ENCODE measurements at regions of chr11 and their contacts with region 1.

Region 1: GRCh38 chr11:43504316-43504950 is 145.7 kb downstream of the TTC17 start:
- DNase-seq: no peak
- H3K4me3 ChIP-seq: no peak overlapping the region
- H3K27ac ChIP-seq: no peak overlapping the region
- H3K4me1 ChIP-seq: no peaks in the 10 kb centered on the region
- H3K27me3 ChIP-seq: peaks cover 5 to 7% of the 10 kb centered on the region in 2 experiments
- CTCF ChIP-seq: peak in 1 of 2 donors; percentile 19
- POLR2A ChIP-seq: no peak

Region 2: DNA sequence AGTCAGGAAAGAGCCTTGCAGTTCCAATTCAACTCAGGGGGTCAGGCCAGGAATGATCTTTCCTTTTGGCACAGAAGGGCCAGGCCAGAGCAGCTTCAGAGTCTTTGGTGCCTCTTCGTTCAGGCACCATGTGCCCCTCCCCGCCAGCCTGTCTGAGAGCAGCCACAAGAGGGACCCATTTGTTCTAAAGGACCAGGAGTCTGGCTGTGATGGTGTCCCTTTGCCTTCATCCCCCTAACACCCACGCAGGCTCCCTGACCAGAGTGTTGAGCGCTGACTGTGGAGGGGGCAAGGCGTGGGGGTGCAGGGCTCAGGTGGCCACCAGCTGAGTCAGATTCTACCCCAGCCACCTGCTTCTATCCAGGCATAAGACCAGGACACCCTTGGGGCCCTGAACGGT is 10.7 kb after region 1 on chr11:
- CTCF ChIA-PET with region 1: interaction called, 12 read pairs
- POLR2A ChIA-PET with region 1: no interaction called
- dilution Hi-C with region 1: no loop called
- intact Hi-C with region 1: no loop called
- DNase-seq: no peak
- H3K4me3 ChIP-seq: no peak overlapping the region
- H3K27ac ChIP-seq: no peak overlapping the region
- H3K4me1 ChIP-seq: no peaks in the 10 kb centered on the region
- H3K27me3 ChIP-seq: no peaks in the 10 kb centered on the region
- CTCF ChIP-seq: peak in 1 of 2 donors; percentile 15
- POLR2A ChIP-seq: no peak

Region 3: DNA sequence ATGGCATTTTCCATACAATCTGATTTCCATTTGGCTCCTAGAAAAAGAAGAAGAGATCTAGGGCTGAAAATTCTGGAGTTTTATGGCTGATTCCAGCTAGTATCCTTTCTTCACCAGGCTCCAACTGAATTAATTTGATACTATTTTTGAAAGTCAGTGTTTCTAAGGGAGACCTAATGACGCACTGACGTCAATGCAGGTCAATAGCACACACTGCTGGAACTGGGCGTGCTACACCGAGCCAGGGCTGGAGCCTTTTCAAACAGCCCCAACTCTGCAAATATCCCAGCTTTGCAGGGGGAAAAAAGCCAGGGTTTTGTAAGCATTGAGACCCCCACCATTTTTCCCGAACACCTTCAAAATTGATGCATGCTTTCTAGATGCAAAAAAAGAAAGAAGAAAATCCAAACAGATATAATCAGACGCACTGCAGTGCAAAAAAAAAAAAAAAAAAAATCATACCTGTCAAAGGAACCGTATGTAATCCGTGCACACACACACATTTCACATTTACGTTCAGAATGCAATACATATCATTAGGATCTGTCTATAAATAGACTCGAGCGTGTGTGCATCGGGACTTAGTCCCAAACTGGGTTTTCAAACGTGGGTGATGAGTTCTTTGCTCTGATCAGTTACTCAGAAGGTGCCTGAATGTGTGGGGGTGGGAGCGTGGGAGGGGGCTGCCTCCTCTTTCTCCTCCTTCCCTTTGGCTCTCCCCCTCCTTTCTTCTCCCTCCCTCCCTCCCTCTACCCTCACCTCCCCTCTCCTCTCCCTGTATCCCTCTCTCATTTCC is 51.6 kb after region 1 on chr11:
- CTCF ChIA-PET with region 1: no interaction called
- POLR2A ChIA-PET with region 1: no interaction called
- dilution Hi-C with region 1: no loop called
- intact Hi-C with region 1: no loop called
- DNase-seq: no peak
- H3K4me3 ChIP-seq: no peak overlapping the region
- H3K27ac ChIP-seq: no peak overlapping the region
- H3K4me1 ChIP-seq: no peaks in the 10 kb centered on the region
- H3K27me3 ChIP-seq: peaks cover 39 to 60% of the 10 kb centered on the region in 2 experiments
- CTCF ChIP-seq: no peak
- POLR2A ChIP-seq: no peak

Region 4: GRCh38 chr11:43567396-43567975 is 63.1 kb after region 1 on chr11:
- CTCF ChIA-PET with region 1: interaction called, 13 read pairs
- POLR2A ChIA-PET with region 1: no interaction called
- dilution Hi-C with region 1: no loop called
- intact Hi-C with region 1: no loop called
- DNase-seq: peak; percentile 49
- H3K4me3 ChIP-seq: no peak overlapping the region
- H3K27ac ChIP-seq: no peak overlapping the region
- H3K4me1 ChIP-seq: no peaks in the 10 kb centered on the region
- H3K27me3 ChIP-seq: peaks cover 18 to 19% of the 10 kb centered on the region in 2 experiments
- CTCF ChIP-seq: peak; percentile 58 to 77
- POLR2A ChIP-seq: no peak

Region 5: DNA sequence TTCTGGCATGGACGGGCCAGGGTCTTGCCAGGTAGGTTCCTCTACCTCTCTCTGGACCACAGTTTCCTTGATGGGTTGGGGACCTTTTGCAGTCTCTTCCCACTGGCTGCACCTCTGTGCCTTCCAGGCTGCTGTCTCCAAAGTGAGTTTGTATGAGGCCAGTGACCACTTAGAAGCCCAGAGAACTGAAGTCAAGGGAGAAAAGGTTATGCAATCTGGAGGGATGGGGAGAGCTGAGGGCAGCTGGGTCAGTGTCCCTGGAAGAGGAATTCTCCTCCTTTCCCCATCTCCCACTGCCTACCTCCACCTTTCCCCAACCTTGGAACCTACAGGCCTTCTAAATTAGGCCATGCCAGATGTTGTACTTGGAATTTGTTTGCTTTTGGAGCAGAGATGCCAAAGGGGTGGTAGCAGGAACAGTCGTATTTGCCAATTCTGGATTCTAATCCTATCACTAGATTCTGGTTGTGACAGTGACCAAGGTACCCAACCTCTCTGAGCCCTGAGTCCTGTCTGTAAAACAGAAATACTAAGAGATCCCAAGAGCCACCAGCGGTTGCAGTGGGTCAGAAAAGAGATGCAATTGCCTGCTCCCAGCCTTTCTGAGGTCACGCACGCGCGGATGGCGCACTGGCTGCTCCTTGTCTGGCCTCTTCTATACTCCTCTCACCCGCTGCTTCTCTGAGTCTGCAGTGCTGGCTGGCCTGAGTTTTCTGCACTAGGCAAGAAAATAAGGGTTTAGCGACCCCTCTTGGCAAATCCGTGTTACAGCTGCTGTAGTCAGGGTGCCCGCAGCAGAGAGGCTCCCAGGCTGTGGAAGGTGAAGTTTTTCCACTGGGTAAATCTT is 532.6 kb after region 1 on chr11:
- CTCF ChIA-PET with region 1: interaction called, 4 read pairs
- POLR2A ChIA-PET with region 1: no interaction called
- dilution Hi-C with region 1: no loop called
- intact Hi-C with region 1: loop called (anchors 5 kb)
- DNase-seq: peak; percentile 65
- H3K4me3 ChIP-seq: no peak overlapping the region
- H3K27ac ChIP-seq: no peak overlapping the region
- H3K4me1 ChIP-seq: no peaks in the 10 kb centered on the region
- H3K27me3 ChIP-seq: peaks cover 3 to 6% of the 10 kb centered on the region in 2 experiments
- CTCF ChIP-seq: peak; percentile 75 to 82
- POLR2A ChIP-seq: no peak

Measured in endothelial cell of umbilical vein (primary cell).